MCF 10A (cell line): ENCODE measurements at regions of chr17 and their contacts with region 1.

Region 1: DNA sequence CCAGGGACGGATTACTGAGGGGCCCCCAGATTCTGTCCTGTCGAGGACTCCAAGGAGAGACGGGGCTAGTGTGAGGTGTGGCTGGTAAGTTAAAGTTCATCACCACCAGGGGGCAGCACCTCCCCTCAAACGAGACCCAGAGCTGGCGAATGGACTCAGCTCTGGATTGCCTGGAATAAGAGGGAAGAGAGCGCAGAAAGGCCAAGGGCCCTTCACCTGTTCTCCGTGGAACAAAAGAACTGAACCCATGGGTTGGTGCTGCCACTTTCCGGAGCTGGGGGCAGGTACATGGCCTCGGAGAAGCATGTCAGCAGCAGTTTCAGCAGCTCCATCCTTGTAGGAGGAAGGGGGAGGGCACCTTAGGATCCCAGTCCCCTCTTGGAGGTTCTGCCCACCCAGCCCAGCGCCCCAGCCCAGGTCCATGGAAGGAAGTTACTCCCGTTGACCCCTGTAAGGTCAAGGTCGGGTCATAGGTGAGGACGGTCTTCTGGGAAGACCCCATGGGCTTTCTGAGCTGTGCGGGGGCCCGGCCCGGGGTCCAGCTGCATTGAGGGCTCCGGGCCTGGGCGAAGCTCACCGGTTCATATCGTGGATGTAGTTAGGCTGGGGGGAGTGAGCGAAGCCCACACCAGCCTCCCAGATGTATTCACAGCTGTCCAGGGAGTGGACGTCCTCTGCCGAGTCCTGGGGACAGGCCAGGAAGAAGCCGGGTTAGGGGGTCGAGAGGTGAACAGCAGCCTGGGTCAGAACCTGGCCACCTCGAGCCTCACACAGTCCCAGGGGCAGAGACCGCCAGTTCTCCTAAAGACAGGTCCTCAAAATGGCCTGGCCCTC is 10.7 kb downstream of the HID1 start:
- DNase-seq: peak; percentile 89
- H3K4me3 Mint-ChIP-seq: no peak overlapping the region
- H3K27ac Mint-ChIP-seq: no peak overlapping the region
- H3K4me1 Mint-ChIP-seq: peaks cover 21% of the 10 kb centered on the region
- H3K27me3 Mint-ChIP-seq: no peaks in the 10 kb centered on the region
- CTCF ChIP-seq: peak; percentile 67

Region 2: GRCh38 chr17:74923533-74924249 is 38.2 kb before region 1 on chr17:
- CTCF ChIA-PET with region 1: interaction called, 233 read pairs
- POLR2A ChIA-PET with region 1: interaction called, 6 read pairs
- intact Hi-C with region 1: loop called (anchors 1 kb)
- DNase-seq: peak; percentile 40
- H3K4me3 Mint-ChIP-seq: peak overlapping the region; percentile 53
- H3K27ac Mint-ChIP-seq: no peak overlapping the region
- H3K4me1 Mint-ChIP-seq: no peaks in the 10 kb centered on the region
- H3K27me3 Mint-ChIP-seq: peaks cover 29% of the 10 kb centered on the region
- CTCF ChIP-seq: peak; percentile 99

Region 3: GRCh38 chr17:74987418-74987908 is 25.6 kb after region 1 on chr17 and contains the start of gene CDR2L:
- CTCF ChIA-PET with region 1: interaction called, 20 read pairs
- POLR2A ChIA-PET with region 1: interaction called, 18 read pairs
- intact Hi-C with region 1: no loop called
- DNase-seq: peak; percentile 90
- H3K4me3 Mint-ChIP-seq: peak within 1 kb of the TSS; percentile 78
- H3K27ac Mint-ChIP-seq: peak within 1 kb of the TSS; percentile 16
- H3K4me1 Mint-ChIP-seq: peaks cover 14% of the 10 kb centered on the region
- H3K27me3 Mint-ChIP-seq: no peaks in the 10 kb centered on the region
- CTCF ChIP-seq: no peak
- total RNA-seq, gene CDR2L: 3.4 and 4.1 TPM in 2 replicates

Region 4: GRCh38 chr17:75012346-75013091 is 50.6 kb after region 1 on chr17 and contains the start of gene MRPL58:
- CTCF ChIA-PET with region 1: interaction called, 67 read pairs
- POLR2A ChIA-PET with region 1: interaction called, 20 read pairs
- intact Hi-C with region 1: no loop called
- DNase-seq: peak; percentile 80
- H3K4me3 Mint-ChIP-seq: peak within 1 kb of the TSS; percentile 96
- H3K27ac Mint-ChIP-seq: peak within 1 kb of the TSS; percentile 77
- H3K4me1 Mint-ChIP-seq: peaks cover 22% of the 10 kb centered on the region
- H3K27me3 Mint-ChIP-seq: no peaks in the 10 kb centered on the region
- CTCF ChIP-seq: peak; percentile 49
- total RNA-seq, gene MRPL58: 56.5 and 71.2 TPM in 2 replicates

Region 5: GRCh38 chr17:75199886-75200618 is 238.2 kb after region 1 on chr17:
- CTCF ChIA-PET with region 1: interaction called, 47 read pairs
- POLR2A ChIA-PET with region 1: interaction called, 5 read pairs
- intact Hi-C with region 1: loop called (anchors 1 kb)
- DNase-seq: no peak
- H3K4me3 Mint-ChIP-seq: no peak overlapping the region
- H3K27ac Mint-ChIP-seq: no peak overlapping the region
- H3K4me1 Mint-ChIP-seq: peaks cover 6% of the 10 kb centered on the region
- H3K27me3 Mint-ChIP-seq: no peaks in the 10 kb centered on the region
- CTCF ChIP-seq: no peak

Region 6: GRCh38 chr17:75319904-75320691 is 358.2 kb after region 1 on chr17:
- CTCF ChIA-PET with region 1: no interaction called
- POLR2A ChIA-PET with region 1: no interaction called
- intact Hi-C with region 1: no loop called
- DNase-seq: no peak
- H3K4me3 Mint-ChIP-seq: no peak overlapping the region
- H3K27ac Mint-ChIP-seq: no peak overlapping the region
- H3K4me1 Mint-ChIP-seq: no peaks in the 10 kb centered on the region
- H3K27me3 Mint-ChIP-seq: no peaks in the 10 kb centered on the region
- CTCF ChIP-seq: no peak